ENCODE measurements at regions of chr14 and their contacts with region 1.

Region 1: GRCh38 chr14:72023722-72024407 is 91.6 kb downstream of the RGS6 start:
- DNase-seq: peak; percentile 60
- H3K4me3 Mint-ChIP-seq: no peak overlapping the region
- H3K27ac Mint-ChIP-seq: no peak overlapping the region
- H3K4me1 Mint-ChIP-seq: peaks cover 3% of the 10 kb centered on the region
- H3K27me3 Mint-ChIP-seq: peaks cover 25% of the 10 kb centered on the region

Region 2: DNA sequence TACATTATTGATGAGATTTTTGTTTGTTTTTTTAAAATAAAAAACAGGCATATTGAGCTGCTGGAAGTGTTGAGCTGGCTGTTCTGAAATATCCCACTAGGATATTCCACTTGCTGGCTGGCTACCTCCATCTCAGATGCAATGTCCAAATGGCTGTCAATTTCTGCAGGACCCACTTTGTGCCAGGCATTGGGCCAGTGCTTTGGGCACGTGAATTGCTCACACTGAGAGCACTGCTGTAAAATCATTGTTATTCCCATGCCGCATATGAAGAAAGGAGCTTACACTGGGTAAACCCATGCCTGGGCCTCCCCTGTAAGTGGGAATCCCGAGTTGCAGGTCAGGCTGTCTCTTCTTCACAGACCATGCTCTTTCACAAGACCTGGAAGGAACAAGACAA is 34.9 kb before region 1 on chr14:
- CTCF ChIA-PET with region 1: no interaction called
- POLR2A ChIA-PET with region 1: no interaction called
- intact Hi-C with region 1: no loop called
- DNase-seq: no peak
- H3K4me3 Mint-ChIP-seq: no peak overlapping the region
- H3K27ac Mint-ChIP-seq: no peak overlapping the region
- H3K4me1 Mint-ChIP-seq: no peaks in the 10 kb centered on the region
- H3K27me3 Mint-ChIP-seq: peaks cover 1% of the 10 kb centered on the region

Region 3: GRCh38 chr14:72049455-72049854 is 25.6 kb after region 1 on chr14:
- CTCF ChIA-PET with region 1: no interaction called
- POLR2A ChIA-PET with region 1: no interaction called
- intact Hi-C with region 1: loop called (anchors 2 kb)
- DNase-seq: peak; percentile 60
- H3K4me3 Mint-ChIP-seq: no peak overlapping the region
- H3K27ac Mint-ChIP-seq: no peak overlapping the region
- H3K4me1 Mint-ChIP-seq: peaks cover 8% of the 10 kb centered on the region
- H3K27me3 Mint-ChIP-seq: peaks cover 15% of the 10 kb centered on the region

Region 4: DNA sequence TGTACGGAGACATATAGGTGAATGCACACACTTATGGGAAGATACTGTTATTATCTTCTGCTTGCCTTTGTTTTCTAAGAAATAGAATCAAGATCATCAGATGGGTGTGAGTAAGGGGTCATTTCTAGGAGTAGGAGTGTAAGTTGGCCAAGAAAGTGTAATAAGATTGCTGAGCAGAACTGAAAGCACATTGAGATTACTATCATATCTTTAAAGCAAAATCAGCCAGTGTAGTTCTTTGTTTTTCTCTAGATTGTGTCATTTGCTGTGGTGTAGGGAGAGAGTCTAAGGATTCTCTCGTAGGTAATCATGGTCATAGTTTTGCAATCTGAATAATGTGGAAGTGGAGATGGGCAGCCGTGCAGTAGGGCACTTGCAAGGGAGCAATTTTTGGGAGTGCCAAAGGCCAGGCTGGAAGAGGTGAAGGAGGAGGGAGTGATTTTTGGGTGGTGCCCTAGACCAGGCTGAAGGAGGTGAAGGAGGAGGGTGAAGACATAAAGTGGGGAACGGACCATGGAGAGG is 40.0 kb after region 1 on chr14:
- CTCF ChIA-PET with region 1: no interaction called
- POLR2A ChIA-PET with region 1: no interaction called
- intact Hi-C with region 1: no loop called
- DNase-seq: no peak
- H3K4me3 Mint-ChIP-seq: no peak overlapping the region
- H3K27ac Mint-ChIP-seq: no peak overlapping the region
- H3K4me1 Mint-ChIP-seq: no peaks in the 10 kb centered on the region
- H3K27me3 Mint-ChIP-seq: peaks cover 1% of the 10 kb centered on the region

Region 5: GRCh38 chr14:72420725-72421474 is 397.0 kb after region 1 on chr14:
- CTCF ChIA-PET with region 1: interaction called, 37 read pairs
- POLR2A ChIA-PET with region 1: no interaction called
- intact Hi-C with region 1: no loop called
- DNase-seq: peak; percentile 86
- H3K4me3 Mint-ChIP-seq: no peak overlapping the region
- H3K27ac Mint-ChIP-seq: no peak overlapping the region
- H3K4me1 Mint-ChIP-seq: peaks cover 4% of the 10 kb centered on the region
- H3K27me3 Mint-ChIP-seq: peaks cover 9% of the 10 kb centered on the region

Measured in activated CD4-positive, alpha-beta memory T cell treated with anti-CD3 and anti-CD28 coated beads for 36 hours (primary cell).